ENCODE measurements at regions of chr3 and their contacts with region 1.

Region 1: GRCh38 chr3:50786631-50787030 is 111.9 kb downstream of the DOCK3 start:
- DNase-seq: no peak
- ATAC-seq: no peak

Region 2: GRCh38 chr3:50221411-50222168 is 565.0 kb before region 1 on chr3:
- intact Hi-C with region 1: no loop called
- DNase-seq: no peak
- ATAC-seq: no peak

Region 3: DNA sequence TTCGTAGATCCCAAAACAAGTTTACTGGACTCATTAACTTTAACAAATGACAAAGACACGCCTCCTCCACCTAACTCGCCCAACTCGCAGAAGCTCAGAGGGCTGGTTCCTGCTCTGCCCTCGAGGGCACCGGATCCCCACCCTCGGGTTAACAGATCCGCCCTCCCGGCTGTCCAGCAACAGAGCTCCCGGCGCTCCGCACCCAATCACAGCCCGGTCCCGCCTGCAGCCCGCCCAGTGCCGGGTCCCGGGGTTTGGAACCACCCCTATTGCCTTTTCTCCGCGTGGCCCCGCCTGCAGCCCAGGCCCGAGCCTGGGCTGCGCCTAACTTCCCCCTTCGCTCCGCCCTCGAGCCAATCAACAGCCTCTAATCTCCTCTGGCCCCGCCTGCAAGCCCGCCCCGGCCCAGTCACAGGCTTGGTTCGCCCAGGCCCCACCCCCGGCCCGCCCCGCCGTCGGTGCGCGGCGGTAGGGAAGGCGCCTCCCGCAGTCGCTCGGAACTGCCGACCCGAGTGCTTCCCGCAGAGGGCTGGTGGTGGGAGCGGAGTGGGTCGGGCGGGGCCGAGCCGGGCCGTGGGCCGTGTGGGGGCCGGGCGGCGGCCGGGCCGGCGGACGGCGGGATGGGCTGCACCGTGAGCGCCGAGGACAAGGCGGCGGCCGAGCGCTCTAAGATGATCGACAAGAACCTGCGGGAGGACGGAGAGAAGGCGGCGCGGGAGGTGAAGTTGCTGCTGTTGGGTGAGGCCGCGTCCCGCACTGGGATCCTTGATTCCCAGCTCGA is 550.7 kb before region 1 on chr3 and contains the start of gene GNAI2:
- intact Hi-C with region 1: no loop called
- DNase-seq: peak; percentile 98
- ATAC-seq: peak; percentile 96
- total RNA-seq, gene GNAI2: 313 TPM

Region 4: DNA sequence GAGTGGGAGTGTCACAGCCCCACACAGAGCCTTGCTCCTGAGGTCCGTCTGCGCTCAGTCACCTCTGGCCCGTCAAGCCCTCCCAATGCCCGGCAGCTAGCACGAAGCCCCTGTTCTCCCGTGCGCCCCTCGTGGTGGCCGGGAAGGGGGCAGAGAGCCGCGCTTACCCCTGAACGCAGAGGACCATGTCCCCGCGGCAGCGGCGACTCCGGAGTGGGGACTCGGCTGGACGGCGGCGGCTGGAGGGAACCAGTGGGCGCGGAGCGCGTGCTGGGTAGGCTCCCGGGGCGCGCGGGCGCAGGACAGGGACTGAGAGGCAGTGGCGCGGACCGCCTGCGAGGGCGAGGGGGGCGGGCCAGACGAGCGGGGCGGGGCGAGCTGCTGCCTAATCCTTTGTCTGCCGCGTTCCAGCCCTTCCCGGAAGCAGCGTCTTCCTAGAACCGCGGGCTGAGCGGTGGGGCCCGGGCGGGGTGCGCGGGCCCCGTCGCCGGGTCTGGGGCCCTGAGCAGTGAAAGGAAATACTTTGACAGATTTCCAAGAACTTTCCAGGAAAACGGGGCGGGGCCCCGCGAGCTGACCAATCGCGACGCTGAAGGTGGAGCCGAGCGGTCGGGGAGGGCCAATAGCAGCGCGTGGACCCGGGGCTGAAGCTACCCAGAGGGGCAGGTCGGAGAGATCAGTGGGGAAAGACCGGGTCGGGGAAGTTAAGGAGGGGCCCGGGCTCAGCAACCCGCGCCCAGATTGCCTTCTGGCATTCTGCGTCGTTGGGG is 175.0 kb before region 1 on chr3 and contains the start of gene CISH:
- intact Hi-C with region 1: no loop called
- DNase-seq: peak; percentile 96
- ATAC-seq: peak; percentile 86
- total RNA-seq, gene CISH: 10.6 TPM

Region 5: DNA sequence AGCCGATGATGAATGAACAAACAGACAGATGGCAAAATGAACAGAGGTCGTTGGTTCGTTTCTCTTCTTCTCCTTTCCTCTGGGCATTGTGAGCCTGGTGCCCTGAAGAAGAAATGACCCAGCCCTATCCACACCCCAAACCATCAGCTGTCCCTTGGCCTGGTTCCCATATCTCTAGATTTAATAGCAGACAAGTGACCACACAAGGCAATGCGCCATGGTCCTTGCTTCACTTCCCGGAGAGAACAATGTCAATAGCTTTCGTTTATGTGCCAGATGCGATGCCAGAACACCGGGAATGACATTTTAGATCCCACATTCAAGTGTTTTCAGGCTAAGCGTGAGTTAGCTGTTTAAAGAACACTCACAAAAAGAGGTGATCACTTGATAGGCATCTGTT is 1349.9 kb after region 1 on chr3:
- intact Hi-C with region 1: loop called (anchors 5 kb)
- DNase-seq: no peak
- ATAC-seq: peak; percentile 41